ENCODE measurements at regions of chr1 and their contacts with region 1.

Region 1: DNA sequence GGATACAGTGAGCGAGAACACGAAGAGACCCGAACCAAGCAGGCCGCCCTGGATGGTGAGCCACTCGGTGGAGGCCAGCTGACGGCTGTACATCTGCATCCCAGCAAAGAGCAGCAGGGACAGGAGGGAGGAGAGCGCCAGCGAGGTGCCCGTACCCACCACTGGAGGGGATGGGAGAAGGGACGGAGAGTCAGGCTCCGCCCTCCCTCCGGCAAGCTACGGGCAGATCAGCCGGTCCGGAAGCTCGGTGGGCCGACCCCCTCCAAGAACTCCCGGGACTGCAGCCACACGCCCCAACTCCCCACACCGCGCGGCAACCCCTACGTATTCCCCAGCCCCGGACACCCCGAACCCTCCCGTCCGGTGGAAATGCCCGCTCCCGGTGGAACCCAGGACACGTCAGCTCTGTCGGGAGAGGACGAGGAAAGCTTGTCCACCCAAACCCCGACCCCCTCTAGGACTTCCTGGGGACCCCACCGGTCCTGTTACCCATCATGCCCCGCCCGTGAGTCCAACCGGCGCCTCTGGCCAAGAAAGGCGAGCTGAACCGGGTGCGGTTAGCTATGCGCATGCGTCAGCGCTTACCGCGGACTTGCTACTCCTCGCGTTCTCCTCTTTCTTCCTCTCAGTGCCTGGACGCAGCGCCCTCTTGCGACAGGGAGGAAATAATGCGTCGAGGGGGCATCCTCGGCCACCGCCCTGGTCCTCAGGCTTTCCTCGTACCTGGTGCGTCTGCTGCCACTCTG is at the start of gene KRTCAP2:
- DNase-seq: peak; percentile 97
- ATAC-seq: peak; percentile 55 to 85
- H3K4me3 ChIP-seq: peak within 1 kb of the TSS; percentile 80
- H3K27ac ChIP-seq: peak within 1 kb of the TSS; percentile 93 to 99
- H3K4me1 ChIP-seq: peaks cover 21% of the 10 kb centered on the region
- CTCF ChIP-seq: peak; percentile 90
- EP300 ChIP-seq: no peak
- POLR2A ChIP-seq: peak; percentile 71
- RAD21 ChIP-seq: peak in 1 of 2 experiments; percentile 10; a peak in 1 of 5 replicates
- polyA plus RNA-seq, gene KRTCAP2: 154 and 227 TPM in 2 replicates

Region 2: DNA sequence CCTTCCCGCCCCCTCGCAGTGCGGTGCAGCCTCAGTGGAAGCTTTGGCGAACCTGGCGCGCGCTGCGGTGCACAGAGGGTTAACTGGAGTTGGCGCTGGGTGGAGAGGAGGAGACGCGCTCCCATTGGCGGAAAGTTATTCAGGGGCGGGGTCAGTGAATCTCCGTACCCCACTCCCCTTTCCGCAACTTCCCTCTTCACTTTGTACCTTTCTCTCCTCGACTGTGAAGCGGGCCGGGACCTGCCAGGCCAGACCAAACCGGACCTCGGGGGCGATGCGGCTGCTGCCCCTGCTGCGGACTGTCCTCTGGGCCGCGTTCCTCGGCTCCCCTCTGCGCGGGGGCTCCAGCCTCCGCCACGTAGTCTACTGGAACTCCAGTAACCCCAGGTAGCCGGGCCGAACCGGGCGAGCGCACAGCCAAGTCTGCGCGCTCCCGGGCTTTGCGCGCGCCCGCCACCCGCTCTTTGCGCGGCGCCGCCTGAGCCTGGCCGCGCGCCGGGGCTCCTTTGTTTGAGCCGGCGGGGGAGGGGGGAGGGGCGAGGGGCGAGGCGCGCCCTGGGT is 109.3 kb before region 1 on chr1 and contains the start of gene EFNA4:
- CTCF ChIA-PET with region 1: interaction called, 10 read pairs
- POLR2A ChIA-PET with region 1: interaction called, 3 read pairs
- DNase-seq: peak; percentile 89 to 91
- ATAC-seq: peak; percentile 72 to 86
- H3K4me3 ChIP-seq: peak within 1 kb of the TSS; percentile 77
- H3K27ac ChIP-seq: peak within 1 kb of the TSS; percentile 81 to 91
- H3K4me1 ChIP-seq: peaks cover 23% of the 10 kb centered on the region
- CTCF ChIP-seq: no peak
- EP300 ChIP-seq: no peak
- POLR2A ChIP-seq: peak; percentile 77
- RAD21 ChIP-seq: no peak
- polyA plus RNA-seq, gene EFNA4: 3.1 and 4.9 TPM in 2 replicates

Region 3: GRCh38 chr1:155091071-155091709 is 81.7 kb before region 1 on chr1:
- CTCF ChIA-PET with region 1: interaction called, 384 read pairs
- POLR2A ChIA-PET with region 1: interaction called, 6 read pairs
- DNase-seq: peak; percentile 73 to 75
- ATAC-seq: peak; percentile 64 to 85
- H3K4me3 ChIP-seq: no peak overlapping the region
- H3K27ac ChIP-seq: peak overlapping the region; percentile 45 to 79; a peak in 5 of 6 replicates
- H3K4me1 ChIP-seq: peaks cover 16% of the 10 kb centered on the region
- CTCF ChIP-seq: peak; percentile 91
- EP300 ChIP-seq: no peak
- POLR2A ChIP-seq: no peak
- RAD21 ChIP-seq: peak; percentile 74 to 76

Region 4: DNA sequence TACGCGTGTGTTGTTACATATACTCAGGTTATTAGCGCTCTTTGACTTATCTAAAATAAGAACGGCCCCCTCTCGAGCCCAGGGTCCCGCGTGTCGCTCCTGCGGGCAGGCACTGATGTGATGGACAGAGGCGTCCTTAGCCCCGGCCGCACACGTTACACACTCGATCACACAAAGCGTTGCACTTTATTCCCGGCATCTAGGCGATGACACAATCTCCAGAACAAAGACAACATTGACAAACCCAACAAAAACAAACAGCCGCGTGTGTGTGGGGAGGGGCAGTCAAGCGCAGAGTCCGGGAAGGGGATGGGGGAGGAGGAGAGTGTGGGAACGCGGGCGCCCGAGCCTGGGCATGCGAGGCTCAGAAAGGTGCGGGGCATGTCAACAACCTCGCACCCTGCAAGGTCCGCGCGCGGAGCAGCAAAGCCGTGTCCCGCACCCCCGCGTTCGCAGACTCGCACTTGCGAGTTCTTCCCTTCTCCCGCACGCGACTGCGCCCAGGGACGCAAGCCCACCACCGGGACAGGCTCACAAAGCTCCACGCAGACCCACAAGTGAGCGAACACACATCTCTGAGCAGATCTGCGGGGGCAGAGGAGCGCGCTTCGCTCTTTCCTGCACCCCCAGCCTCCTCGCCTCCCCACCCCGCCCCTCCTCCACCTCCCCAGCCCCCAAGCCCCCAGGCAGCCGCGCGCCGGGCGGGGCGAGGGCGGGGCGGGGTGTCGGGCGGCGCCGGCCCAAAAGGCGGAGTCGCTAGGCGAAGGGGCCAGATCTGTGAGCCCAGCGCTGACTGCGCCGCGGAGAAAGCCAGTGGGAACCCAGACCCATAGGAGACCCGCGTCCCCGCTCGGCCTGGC is 45.6 kb before region 1 on chr1 and contains the start of gene EFNA1:
- CTCF ChIA-PET with region 1: interaction called, 202 read pairs
- POLR2A ChIA-PET with region 1: no interaction called
- DNase-seq: peak in 1 of 2 experiments; percentile 92
- ATAC-seq: peak; percentile 48 to 69
- H3K4me3 ChIP-seq: peak within 1 kb of the TSS; percentile 55
- H3K27ac ChIP-seq: peak within 1 kb of the TSS; percentile 80 to 90
- H3K4me1 ChIP-seq: peaks cover 59% of the 10 kb centered on the region
- CTCF ChIP-seq: no peak
- EP300 ChIP-seq: peak in 1 of 2 experiments; percentile 21; a peak in 2 of 5 replicates
- POLR2A ChIP-seq: peak; percentile 60
- RAD21 ChIP-seq: no peak
- polyA plus RNA-seq, gene EFNA1: 38.9 and 64.6 TPM in 2 replicates

Region 5: DNA sequence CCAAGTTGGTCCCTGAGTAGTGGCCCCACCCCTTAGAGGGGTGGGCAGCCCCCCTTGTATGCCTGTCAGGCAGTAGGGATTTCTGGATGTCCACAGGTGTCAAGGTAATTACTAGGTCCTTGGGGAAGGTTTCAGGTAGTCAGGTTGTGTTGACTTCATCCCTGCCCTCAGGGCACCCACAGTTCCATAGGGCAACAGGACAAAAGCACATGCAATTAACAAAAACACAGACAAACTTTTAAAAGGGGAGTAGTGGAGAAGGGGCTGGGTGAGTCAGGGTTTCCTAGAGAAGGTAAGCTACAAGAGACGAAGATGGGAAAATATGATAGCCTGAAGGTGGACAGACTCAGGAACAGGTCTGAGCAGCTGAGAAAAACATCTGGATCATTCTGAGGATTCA is 13.9 kb before region 1 on chr1:
- CTCF ChIA-PET with region 1: interaction called, 75 read pairs
- POLR2A ChIA-PET with region 1: no interaction called
- DNase-seq: no peak
- ATAC-seq: no peak
- H3K4me3 ChIP-seq: no peak overlapping the region
- H3K27ac ChIP-seq: no peak overlapping the region
- H3K4me1 ChIP-seq: no peaks in the 10 kb centered on the region
- CTCF ChIP-seq: no peak
- EP300 ChIP-seq: no peak
- POLR2A ChIP-seq: no peak
- RAD21 ChIP-seq: no peak

Region 6: GRCh38 chr1:155193275-155193990 is 20.5 kb after region 1 on chr1:
- CTCF ChIA-PET with region 1: interaction called, 176 read pairs
- POLR2A ChIA-PET with region 1: interaction called, 54 read pairs
- DNase-seq: peak; percentile 84 to 93
- ATAC-seq: peak; percentile 76 to 90
- H3K4me3 ChIP-seq: peak overlapping the region; percentile 79
- H3K27ac ChIP-seq: peak overlapping the region; percentile 84 to 96
- H3K4me1 ChIP-seq: peaks cover 22% of the 10 kb centered on the region
- CTCF ChIP-seq: peak; percentile 95
- EP300 ChIP-seq: no peak
- POLR2A ChIP-seq: peak; percentile 49; the same call in 1 of the 2 replicates
- RAD21 ChIP-seq: peak; percentile 59 to 64; a peak in 4 of 5 replicates

Region 7: GRCh38 chr1:155227261-155228095 is 54.6 kb after region 1 on chr1:
- CTCF ChIA-PET with region 1: interaction called, 29 read pairs
- POLR2A ChIA-PET with region 1: interaction called, 3 read pairs
- DNase-seq: peak; percentile 99 to 100
- ATAC-seq: peak; percentile 94 to 97
- H3K4me3 ChIP-seq: peak overlapping the region; percentile 57
- H3K27ac ChIP-seq: peak overlapping the region; percentile 88 to 90
- H3K4me1 ChIP-seq: peaks cover 43% of the 10 kb centered on the region
- CTCF ChIP-seq: no peak
- EP300 ChIP-seq: no peak
- POLR2A ChIP-seq: peak; percentile 82
- RAD21 ChIP-seq: no peak